ENCODE measurements at regions of chr19 and their contacts with region 1.

Region 1: DNA sequence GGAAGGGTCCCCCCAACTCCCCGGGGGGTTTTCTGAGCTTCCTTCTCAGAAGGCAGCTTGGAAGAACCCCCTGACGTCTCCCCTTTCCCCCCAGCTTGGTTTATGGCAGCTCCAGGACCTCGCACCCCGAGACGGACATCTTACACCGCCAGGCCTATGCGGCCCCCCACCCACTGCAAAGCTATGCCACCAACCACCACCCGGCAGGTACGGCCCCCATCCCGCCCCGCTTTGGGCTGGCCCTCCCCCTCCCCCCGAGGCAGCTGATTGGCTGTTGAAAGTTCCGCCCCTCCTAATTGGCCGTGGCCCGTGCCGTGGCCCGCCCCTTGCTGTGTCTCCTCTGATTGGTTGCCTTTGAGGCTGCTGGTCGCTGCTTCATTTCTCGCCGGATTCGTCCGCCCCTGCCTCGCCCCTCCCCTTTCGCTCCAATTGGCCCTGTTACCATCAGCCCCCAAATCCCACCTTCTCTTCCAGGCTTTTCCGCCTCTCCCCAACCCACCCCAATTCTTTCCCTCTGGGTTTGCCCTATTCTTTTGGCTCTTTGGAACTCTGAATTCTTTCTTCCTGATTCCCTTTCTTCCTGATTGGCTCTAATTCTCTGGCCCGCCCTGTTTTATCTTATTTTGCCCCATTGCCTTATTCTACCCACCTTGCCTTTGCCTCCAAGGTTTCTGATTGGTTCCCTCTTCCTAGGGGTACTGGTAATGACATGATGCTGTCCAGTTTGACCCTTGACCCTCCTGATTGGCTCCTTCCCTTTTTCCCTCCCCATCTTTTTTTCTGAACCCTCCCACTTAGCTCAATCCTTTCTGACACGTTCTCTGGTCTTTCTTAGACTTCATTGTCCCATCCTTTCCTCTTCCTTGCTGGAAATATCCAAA is 2.5 kb downstream of the PRR12 start:
- DNase-seq: peak; percentile 95
- ATAC-seq: peak; percentile 64

Region 2: DNA sequence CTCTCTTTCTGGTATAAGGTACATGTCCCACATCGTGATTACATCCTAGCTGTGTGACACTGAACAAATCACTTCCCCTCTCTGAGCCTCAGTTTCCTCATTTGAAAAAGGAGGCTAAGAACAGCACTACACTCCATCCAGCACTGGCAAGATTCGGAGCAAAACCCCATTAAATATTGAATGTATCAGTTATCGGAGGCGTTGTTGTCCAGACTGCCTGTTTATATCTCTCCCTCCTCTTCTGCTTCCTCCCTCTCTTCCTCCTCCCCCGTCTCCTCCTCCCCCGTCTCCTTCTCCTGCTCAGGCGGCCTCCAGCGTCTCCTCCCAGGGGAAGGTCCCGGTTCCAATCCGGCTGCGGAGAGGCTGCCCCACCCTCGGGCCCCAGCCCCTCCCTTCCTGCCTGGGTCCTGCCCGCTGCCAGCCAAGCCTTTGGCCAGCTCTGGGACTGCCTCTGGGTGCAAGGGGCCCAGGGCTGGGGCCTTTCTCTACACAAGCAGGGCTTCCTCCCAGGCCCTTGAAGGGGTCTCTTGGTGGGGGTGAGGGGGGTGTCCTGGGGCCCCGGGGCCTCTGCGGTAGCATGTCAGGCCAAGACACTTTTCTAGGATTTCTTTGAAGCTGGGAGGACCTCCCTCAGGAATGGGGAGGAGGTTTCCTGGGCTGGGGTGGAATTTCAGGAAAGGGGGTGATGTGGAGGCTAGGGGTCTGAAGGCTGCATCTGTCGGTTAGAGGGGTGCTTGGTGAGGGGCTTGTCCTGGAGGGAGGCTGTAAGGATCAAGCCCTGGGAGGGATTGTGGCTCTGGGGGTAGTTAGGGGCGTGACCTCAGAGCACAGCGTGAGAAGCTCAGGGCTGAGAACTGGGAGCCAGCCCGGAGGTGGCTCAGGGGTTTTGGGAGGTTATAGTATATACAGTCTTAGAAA is 44.6 kb after region 1 on chr19:
- intact Hi-C with region 1: loop called (anchors 2 kb)
- DNase-seq: peak; percentile 94
- ATAC-seq: peak; percentile 7